ENCODE measurements at regions of chr14 and their contacts with region 1.

Region 1: DNA sequence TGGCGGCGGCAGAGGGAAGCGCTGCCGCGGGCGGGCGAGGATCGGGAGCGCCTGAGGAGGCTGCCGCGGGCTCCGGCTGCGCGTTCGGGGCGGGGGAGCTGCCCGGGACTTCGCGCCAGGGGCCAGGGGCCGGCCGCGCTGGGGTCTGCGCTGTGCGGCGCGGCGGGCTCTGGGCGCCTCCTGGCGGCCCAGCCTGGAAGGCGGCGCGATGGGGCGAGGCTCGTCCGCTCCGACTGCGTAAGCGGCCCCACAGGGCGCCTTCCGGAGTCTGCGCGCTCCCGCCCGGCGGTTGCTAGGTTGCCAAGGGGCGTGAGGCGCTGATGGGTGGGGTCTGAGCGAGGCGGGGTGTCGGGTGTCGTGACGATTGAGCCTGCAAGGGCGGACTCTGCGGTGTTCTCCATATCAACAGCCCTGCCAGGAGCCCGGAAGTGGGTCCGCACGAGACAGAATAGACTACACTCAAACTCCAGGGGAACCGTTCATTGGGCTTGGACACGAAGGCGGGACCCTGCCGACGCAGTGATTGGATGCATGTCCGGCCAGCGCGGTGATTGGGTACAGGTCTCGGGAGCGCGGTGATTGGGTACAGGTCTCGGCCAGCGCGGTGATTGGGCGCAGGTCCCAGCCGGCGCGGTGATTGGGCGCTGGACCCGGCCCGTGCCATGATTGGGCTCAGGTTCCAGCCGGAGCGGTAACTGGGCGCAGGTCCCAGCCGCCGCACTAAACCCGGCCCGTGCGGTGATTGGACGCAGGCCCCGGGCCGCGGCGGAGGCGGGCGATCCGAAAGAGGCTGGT is at the start of gene TEDC1:
- DNase-seq: peak; percentile 100
- H3K4me3 ChIP-seq: peak within 1 kb of the TSS; percentile 71
- H3K27ac ChIP-seq: no peak within 1 kb of the TSS
- H3K27me3 ChIP-seq: peaks cover 22% of the 10 kb centered on the region
- CTCF ChIP-seq: peak; percentile 57
- polyA plus RNA-seq, gene TEDC1: 1.7 and 1.9 TPM in 2 replicates

Region 2: GRCh38 chr14:105369653-105370040 is 121.1 kb before region 1 on chr14:
- CTCF ChIA-PET with region 1: interaction called, 34 read pairs
- POLR2A ChIA-PET with region 1: interaction called, 5 read pairs
- DNase-seq: no peak
- H3K4me3 ChIP-seq: no peak overlapping the region
- H3K27ac ChIP-seq: no peak overlapping the region
- H3K27me3 ChIP-seq: no peaks in the 10 kb centered on the region
- CTCF ChIP-seq: no peak

Measured in AG04450 (cell line).